Adrenal gland (tissue), 19 donors: ENCODE measurements at regions of chr3 and their contacts with region 1.

Region 1: DNA sequence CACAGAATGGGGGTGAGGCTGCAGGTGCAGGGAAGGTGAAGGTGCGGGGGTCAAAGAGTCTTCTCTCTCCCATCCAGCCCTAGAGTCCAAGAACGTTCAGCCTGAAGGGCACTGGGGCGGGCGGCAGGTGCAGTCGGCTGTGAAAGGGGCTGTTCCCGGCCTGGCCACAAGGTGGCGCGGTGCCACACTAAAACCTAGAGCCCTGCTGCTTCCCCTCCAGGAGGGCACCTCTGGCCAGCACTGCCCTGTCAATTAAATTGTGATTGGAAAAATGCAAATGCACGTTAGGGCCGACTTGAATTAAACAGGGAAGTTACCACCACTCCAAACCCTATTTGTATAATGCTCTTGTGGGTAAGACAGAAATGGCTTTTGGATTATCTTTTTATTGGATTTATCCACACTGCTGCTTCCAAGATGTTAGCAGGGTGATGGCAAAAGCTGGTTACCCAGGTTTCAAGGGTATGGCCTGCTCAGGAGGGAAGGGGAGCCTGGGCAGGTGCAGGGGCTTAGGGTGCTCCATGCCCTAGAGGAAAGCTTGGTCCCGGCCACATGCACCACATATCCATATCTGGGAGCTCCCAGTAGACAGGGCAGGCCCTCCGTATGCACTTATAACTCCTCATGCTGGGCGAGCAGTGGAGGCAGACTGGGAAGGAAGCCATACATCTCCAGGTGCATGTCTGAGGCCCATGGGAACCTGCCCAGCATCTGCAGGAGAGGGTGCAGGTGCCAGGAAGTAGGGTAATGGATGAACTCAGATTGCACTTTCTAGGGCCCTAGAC is 119.8 kb downstream of the ADCY5 start:
- DNase-seq: peak; percentile 66 to 92 (median 83)
- H3K4me3 ChIP-seq: no peak overlapping the region
- H3K27ac ChIP-seq: no peak overlapping the region
- H3K4me1 ChIP-seq: peaks cover 8 to 10% of the 10 kb centered on the region in 2 donors
- H3K27me3 ChIP-seq: peaks cover 3% of the 10 kb centered on the region
- CTCF ChIP-seq: peak; percentile 83 to 95 (median 94)
- POLR2A ChIP-seq: peak in 1 of 2 donors; percentile 17

Region 2: GRCh38 chr3:123432832-123433523 is 103.9 kb after region 1 on chr3:
- intact Hi-C with region 1: no loop called
- DNase-seq: no peak
- H3K4me3 ChIP-seq: no peak overlapping the region
- H3K27ac ChIP-seq: peak overlapping the region in 1 of 5 donors; percentile 49
- H3K4me1 ChIP-seq: no peaks in the 10 kb centered on the region
- H3K27me3 ChIP-seq: no peaks in the 10 kb centered on the region
- CTCF ChIP-seq: no peak
- POLR2A ChIP-seq: no peak

Region 3: GRCh38 chr3:123449102-123449996 is 120.3 kb after region 1 on chr3:
- intact Hi-C with region 1: loop called in 1 of 2 experiments (anchors 5 kb)
- DNase-seq: peak in 4 of 7 donors; percentile 11 to 30 (median 26)
- H3K4me3 ChIP-seq: peak overlapping the region in 2 of 4 donors; percentile 49 to 81
- H3K27ac ChIP-seq: peak overlapping the region in 3 of 5 donors; percentile 47 to 77 (median 64)
- H3K4me1 ChIP-seq: peaks cover 0 to 9% of the 10 kb centered on the region in 2 donors
- H3K27me3 ChIP-seq: peaks cover 7% of the 10 kb centered on the region
- CTCF ChIP-seq: no peak
- POLR2A ChIP-seq: no peak

Region 4: GRCh38 chr3:123489400-123490004 is 160.5 kb after region 1 on chr3:
- intact Hi-C with region 1: loop called (anchors 2 kb)
- DNase-seq: peak; percentile 66 to 88 (median 71)
- H3K4me3 ChIP-seq: no peak overlapping the region
- H3K27ac ChIP-seq: no peak overlapping the region
- H3K4me1 ChIP-seq: no peaks in the 10 kb centered on the region
- H3K27me3 ChIP-seq: no peaks in the 10 kb centered on the region
- CTCF ChIP-seq: peak; percentile 76 to 92 (median 88)
- POLR2A ChIP-seq: no peak

Region 5: GRCh38 chr3:123559040-123559861 is 230.2 kb after region 1 on chr3:
- intact Hi-C with region 1: loop called (anchors 2 to 10 kb)
- DNase-seq: peak in 3 of 7 donors; percentile 19 to 35 (median 32)
- H3K4me3 ChIP-seq: no peak overlapping the region
- H3K27ac ChIP-seq: no peak overlapping the region
- H3K4me1 ChIP-seq: peaks cover 0 to 6% of the 10 kb centered on the region in 2 donors
- H3K27me3 ChIP-seq: no peaks in the 10 kb centered on the region
- CTCF ChIP-seq: peak; percentile 67 to 88 (median 78)
- POLR2A ChIP-seq: no peak